Activated CD4-positive, alpha-beta T cell treated with anti-CD3 and anti-CD28 coated beads, Interleukin-2, amount 10 ng/mL, durations not matched to agents 24 days and 14 days (primary cell): ENCODE measurements at regions of chr6 and their contacts with region 1.

Region 1: GRCh38 chr6:159042003-159042825 is 2.6 kb downstream of the TAGAP start:
- DNase-seq: peak; percentile 93
- H3K4me3 Mint-ChIP-seq: peak overlapping the region; percentile 94
- H3K27ac Mint-ChIP-seq: peak overlapping the region; percentile 99
- H3K4me1 Mint-ChIP-seq: peaks cover 58% of the 10 kb centered on the region
- H3K27me3 Mint-ChIP-seq: no peaks in the 10 kb centered on the region

Region 2: GRCh38 chr6:158803733-158804143 is 238.5 kb before region 1 on chr6:
- intact Hi-C with region 1: no loop called
- DNase-seq: peak; percentile 86
- H3K4me3 Mint-ChIP-seq: peak overlapping the region; percentile 84
- H3K27ac Mint-ChIP-seq: peak overlapping the region; percentile 75
- H3K4me1 Mint-ChIP-seq: peaks cover 71% of the 10 kb centered on the region
- H3K27me3 Mint-ChIP-seq: no peaks in the 10 kb centered on the region

Region 3: GRCh38 chr6:158999666-159000403 is 42.4 kb before region 1 on chr6 and contains the start of gene RSPH3:
- intact Hi-C with region 1: loop called (anchors 5 kb)
- DNase-seq: peak; percentile 97
- H3K4me3 Mint-ChIP-seq: peak within 1 kb of the TSS; percentile 96
- H3K27ac Mint-ChIP-seq: peak within 1 kb of the TSS; percentile 94
- H3K4me1 Mint-ChIP-seq: peaks cover 37% of the 10 kb centered on the region
- H3K27me3 Mint-ChIP-seq: no peaks in the 10 kb centered on the region
- total RNA-seq, gene RSPH3: 4.7 and 5.1 TPM in 2 replicates

Region 4: GRCh38 chr6:159031846-159032245 is 10.4 kb before region 1 on chr6:
- intact Hi-C with region 1: no loop called
- DNase-seq: no peak
- H3K4me3 Mint-ChIP-seq: no peak overlapping the region
- H3K27ac Mint-ChIP-seq: no peak overlapping the region
- H3K4me1 Mint-ChIP-seq: peaks cover 15% of the 10 kb centered on the region
- H3K27me3 Mint-ChIP-seq: no peaks in the 10 kb centered on the region

Region 5: DNA sequence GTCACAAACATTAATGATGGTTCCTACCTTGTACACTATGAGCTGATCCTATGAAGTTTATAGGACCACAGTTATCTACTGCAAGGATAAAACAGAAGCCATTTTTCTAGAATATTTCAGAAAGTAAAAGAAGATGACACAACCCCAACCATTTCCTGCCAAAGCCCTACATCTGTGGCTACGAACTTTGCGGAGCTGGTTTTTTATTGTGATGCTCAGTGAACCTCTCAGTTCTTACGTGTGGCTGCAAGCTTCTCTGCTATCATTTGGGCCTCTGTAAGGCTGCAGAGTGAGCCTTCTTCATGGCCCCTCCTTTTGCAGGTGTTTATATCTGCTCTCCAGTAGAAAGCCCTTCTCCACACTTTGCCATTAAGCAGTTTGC is 20.3 kb after region 1 on chr6:
- intact Hi-C with region 1: loop called (anchors 1 kb)
- DNase-seq: peak; percentile 92
- H3K4me3 Mint-ChIP-seq: peak overlapping the region; percentile 62
- H3K27ac Mint-ChIP-seq: peak overlapping the region; percentile 94
- H3K4me1 Mint-ChIP-seq: peaks cover 83% of the 10 kb centered on the region
- H3K27me3 Mint-ChIP-seq: no peaks in the 10 kb centered on the region

Region 6: GRCh38 chr6:159084493-159085091 is 42.4 kb after region 1 on chr6:
- intact Hi-C with region 1: no loop called
- DNase-seq: no peak
- H3K4me3 Mint-ChIP-seq: no peak overlapping the region
- H3K27ac Mint-ChIP-seq: no peak overlapping the region
- H3K4me1 Mint-ChIP-seq: peaks cover 18% of the 10 kb centered on the region
- H3K27me3 Mint-ChIP-seq: no peaks in the 10 kb centered on the region

Region 7: GRCh38 chr6:159104163-159104925 is 62.1 kb after region 1 on chr6:
- intact Hi-C with region 1: loop called (anchors 1 kb)
- DNase-seq: peak; percentile 93
- H3K4me3 Mint-ChIP-seq: peak overlapping the region; percentile 77
- H3K27ac Mint-ChIP-seq: peak overlapping the region; percentile 85
- H3K4me1 Mint-ChIP-seq: peaks cover 68% of the 10 kb centered on the region
- H3K27me3 Mint-ChIP-seq: no peaks in the 10 kb centered on the region

Region 8: GRCh38 chr6:159968440-159969203 is 926.4 kb after region 1 on chr6 and contains the start of gene IGF2R:
- intact Hi-C with region 1: loop called (anchors 10 kb)
- DNase-seq: peak; percentile 98
- H3K4me3 Mint-ChIP-seq: peak within 1 kb of the TSS; percentile 88
- H3K27ac Mint-ChIP-seq: peak within 1 kb of the TSS; percentile 91
- H3K4me1 Mint-ChIP-seq: peaks cover 37% of the 10 kb centered on the region
- H3K27me3 Mint-ChIP-seq: peaks cover 23% of the 10 kb centered on the region
- total RNA-seq, gene IGF2R: 75.1 and 77.9 TPM in 2 replicates